WTC11 (cell line): ENCODE measurements at regions of chr7 and their contacts with region 1.

Region 1: DNA sequence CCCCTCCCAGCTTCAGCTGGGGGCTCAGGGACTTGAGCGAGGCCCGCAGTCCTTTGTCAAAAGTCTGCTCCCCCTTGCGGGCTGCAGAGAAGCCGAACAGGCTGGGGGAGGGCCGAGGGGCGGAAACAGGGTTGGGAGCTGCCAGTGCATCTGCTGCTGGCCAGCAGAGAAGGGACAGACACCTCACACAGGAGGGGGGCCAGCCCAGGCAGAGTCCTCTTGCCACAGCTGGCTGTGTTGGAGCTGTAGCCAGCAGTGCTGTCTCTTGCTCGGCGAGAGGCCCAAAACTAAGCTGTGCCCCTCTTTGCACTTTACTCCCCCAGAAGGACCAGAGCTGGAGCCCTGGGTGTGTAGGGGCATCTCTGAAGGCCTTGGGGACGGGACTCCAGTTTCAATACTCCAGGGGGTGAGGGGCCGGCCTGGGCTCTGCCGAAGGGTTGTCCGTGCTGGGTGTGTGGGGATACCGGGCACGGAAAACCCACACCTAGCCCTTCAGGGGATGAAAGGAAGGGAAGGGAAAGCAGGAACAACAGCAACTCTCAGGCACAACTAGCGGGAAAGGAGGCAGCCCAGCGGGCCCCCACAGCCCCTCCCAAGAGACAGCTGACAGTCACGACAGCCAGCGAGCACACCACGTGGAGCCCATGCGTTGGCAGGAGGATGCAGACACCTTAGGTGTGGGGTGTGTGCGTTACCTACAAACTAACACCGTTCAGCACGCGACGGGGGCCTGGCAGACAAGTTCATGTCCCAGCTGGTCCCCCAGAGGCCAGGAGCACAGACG is 17.8 kb downstream of the YKT6 start:
- DNase-seq: peak; percentile 81
- ATAC-seq: peak; percentile 68
- H3K4me3 Mint-ChIP-seq: no peak overlapping the region
- H3K27ac Mint-ChIP-seq: peak overlapping the region; percentile 54
- H3K4me1 Mint-ChIP-seq: peaks cover 30% of the 10 kb centered on the region
- H3K27me3 Mint-ChIP-seq: no peaks in the 10 kb centered on the region
- CTCF ChIP-seq: no peak

Region 2: DNA sequence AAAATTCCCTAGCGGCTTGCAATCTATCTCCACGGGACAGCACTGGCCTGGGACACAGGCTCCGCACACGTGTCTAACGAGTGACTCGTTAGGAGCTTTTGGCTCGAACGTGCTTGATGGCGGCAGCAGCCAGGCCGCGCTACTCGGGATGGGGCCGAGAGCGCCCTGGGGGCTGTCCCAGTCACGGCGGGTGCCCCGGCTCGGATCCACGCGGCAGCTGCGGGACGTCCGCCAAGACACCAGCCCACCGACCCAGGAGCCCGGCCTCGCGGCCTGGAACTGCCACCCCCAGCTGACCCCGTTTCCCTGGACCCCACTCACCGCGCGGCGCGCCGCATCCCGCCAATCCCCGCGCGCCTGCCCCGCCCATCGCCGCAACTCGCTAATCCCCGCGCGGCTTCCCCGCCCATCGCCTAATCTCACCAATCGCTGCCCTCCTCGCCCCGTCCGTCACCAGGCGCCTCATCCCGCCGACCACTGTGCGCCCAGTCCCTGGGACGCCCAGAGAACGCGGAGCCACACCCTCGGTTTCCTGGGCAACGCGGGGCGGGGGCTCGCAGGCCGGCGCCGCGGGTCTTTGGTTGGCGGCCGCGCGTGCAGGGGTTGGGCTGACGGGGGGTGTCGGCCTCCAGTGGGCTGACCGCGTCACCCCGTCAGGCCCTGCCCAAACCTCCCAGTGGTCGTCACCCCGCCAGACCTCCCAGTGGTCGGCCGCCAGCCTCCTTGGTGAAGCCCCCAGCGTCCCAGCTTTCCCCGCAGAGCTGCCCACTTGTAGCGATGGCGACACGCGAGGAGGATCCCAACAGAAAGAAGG is 95.2 kb before region 1 on chr7 and contains the start of gene POLD2:
- CTCF ChIA-PET with region 1: interaction called, 17 read pairs
- POLR2A ChIA-PET with region 1: no interaction called
- DNase-seq: peak; percentile 98
- ATAC-seq: peak; percentile 99
- H3K4me3 Mint-ChIP-seq: peak within 1 kb of the TSS; percentile 92
- H3K27ac Mint-ChIP-seq: peak within 1 kb of the TSS; percentile 68; the same call in 1 of the 2 replicates
- H3K4me1 Mint-ChIP-seq: peaks cover 10% of the 10 kb centered on the region
- H3K27me3 Mint-ChIP-seq: peaks cover 35% of the 10 kb centered on the region
- CTCF ChIP-seq: no peak
- total RNA-seq, gene POLD2: 140 to 154 TPM (median 146 TPM) in 3 replicates

Region 3: DNA sequence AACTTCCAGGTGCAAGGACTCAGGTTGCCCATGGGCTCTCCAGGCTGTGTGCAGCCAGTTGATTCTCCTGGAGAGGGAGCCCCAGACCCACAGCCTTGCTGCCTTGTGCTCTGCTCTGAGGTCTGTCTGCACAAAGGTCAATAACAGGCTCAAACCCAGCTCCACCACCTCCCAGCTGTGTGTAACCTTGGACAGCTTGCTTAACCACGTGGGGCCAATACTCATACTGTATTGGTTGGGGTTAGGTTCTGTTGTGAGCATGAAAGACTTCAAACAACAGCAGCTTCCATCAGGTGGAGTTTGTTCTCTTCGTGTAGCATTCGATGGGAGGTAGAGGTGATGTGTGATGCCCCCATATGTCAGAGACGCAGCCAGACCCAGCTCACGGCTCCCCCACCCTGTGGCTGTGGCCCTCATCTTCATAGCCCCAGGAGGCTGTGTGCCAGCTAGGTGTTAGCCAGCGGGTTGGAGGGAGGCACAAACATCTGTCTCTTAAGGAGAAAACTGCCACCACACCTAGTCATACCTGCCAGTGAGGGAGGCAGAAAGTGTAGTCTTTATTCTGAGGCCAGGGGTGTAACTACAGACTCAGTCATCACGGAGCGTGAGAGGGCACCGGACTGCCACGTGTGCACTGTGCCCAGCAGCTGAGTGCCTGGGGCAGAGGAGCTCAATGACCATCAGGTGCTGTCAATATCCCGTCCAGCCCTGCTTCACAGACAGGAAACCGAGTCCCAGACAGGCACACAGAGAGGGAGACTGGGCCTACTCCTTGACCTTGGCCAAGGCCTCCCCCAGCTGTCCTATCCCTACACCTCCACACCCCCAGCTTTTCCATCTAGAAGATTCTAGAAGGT is 87.2 kb before region 1 on chr7:
- CTCF ChIA-PET with region 1: interaction called, 21 read pairs
- POLR2A ChIA-PET with region 1: no interaction called
- DNase-seq: peak; percentile 58
- ATAC-seq: peak; percentile 95
- H3K4me3 Mint-ChIP-seq: no peak overlapping the region
- H3K27ac Mint-ChIP-seq: no peak overlapping the region
- H3K4me1 Mint-ChIP-seq: peaks cover 18% of the 10 kb centered on the region
- H3K27me3 Mint-ChIP-seq: peaks cover 46% of the 10 kb centered on the region
- CTCF ChIP-seq: no peak

Region 4: GRCh38 chr7:44200647-44201461 is 17.8 kb before region 1 on chr7 and contains the start of gene YKT6:
- CTCF ChIA-PET with region 1: interaction called, 13 read pairs
- POLR2A ChIA-PET with region 1: interaction called, 3 read pairs
- DNase-seq: peak; percentile 94
- ATAC-seq: peak; percentile 96
- H3K4me3 Mint-ChIP-seq: peak within 1 kb of the TSS; percentile 85
- H3K27ac Mint-ChIP-seq: no peak within 1 kb of the TSS
- H3K4me1 Mint-ChIP-seq: peaks cover 14% of the 10 kb centered on the region
- H3K27me3 Mint-ChIP-seq: peaks cover 23% of the 10 kb centered on the region
- CTCF ChIP-seq: no peak
- total RNA-seq, gene YKT6: 82.2 to 102 TPM (median 83.7 TPM) in 3 replicates

Region 5: DNA sequence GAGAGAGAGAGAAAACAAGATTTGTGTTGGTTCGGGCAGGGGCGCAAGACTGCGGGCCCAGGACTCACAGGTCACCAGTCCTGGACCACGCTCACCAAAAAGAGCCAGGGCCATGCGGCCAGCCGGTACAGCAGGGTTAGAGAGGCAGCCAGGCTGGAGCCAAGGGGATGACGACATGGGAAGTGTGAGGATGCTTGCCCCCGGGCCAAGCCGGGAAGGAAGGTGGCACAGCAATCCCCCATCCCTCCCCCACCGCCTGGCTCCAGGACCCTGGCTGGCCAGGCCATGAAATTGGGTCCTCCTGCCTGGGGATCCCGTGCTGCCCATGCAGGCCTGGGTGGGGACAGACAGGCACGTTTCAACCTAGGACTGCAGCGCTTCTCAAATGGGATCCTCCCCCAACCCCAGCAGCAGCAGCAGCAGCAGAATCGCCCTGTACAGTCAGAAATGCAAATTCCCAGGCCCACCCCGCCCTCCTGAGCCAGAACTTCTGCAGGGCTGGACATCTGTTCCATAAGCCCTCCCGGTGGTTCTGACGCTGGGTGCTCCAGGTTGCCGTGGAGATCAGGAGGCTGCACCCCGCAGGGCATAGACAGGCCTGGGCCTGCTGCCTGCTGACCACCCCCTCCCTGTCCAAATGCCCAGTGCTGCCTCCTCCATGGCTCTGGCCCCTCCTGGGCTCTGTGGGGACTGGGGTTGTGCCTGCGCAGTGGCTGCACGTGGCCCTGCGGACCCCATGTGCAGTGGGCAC is 17.1 kb after region 1 on chr7:
- CTCF ChIA-PET with region 1: interaction called, 27 read pairs
- POLR2A ChIA-PET with region 1: no interaction called
- DNase-seq: no peak
- ATAC-seq: no peak
- H3K4me3 Mint-ChIP-seq: no peak overlapping the region
- H3K27ac Mint-ChIP-seq: no peak overlapping the region
- H3K4me1 Mint-ChIP-seq: no peaks in the 10 kb centered on the region
- H3K27me3 Mint-ChIP-seq: no peaks in the 10 kb centered on the region
- CTCF ChIP-seq: no peak

Region 6: GRCh38 chr7:44240983-44241510 is 22.4 kb after region 1 on chr7:
- CTCF ChIA-PET with region 1: interaction called, 27 read pairs
- POLR2A ChIA-PET with region 1: no interaction called
- DNase-seq: peak; percentile 77
- ATAC-seq: peak; percentile 89
- H3K4me3 Mint-ChIP-seq: no peak overlapping the region
- H3K27ac Mint-ChIP-seq: no peak overlapping the region
- H3K4me1 Mint-ChIP-seq: no peaks in the 10 kb centered on the region
- H3K27me3 Mint-ChIP-seq: no peaks in the 10 kb centered on the region; the same call in 1 of the 2 replicates
- CTCF ChIP-seq: no peak; the same call in 1 of the 2 replicates